Activated B cell treated with CpG ODN at 0.5 μM for 24 hours (primary cell): ENCODE measurements at regions of chr9 and their contacts with region 1.

Region 1: DNA sequence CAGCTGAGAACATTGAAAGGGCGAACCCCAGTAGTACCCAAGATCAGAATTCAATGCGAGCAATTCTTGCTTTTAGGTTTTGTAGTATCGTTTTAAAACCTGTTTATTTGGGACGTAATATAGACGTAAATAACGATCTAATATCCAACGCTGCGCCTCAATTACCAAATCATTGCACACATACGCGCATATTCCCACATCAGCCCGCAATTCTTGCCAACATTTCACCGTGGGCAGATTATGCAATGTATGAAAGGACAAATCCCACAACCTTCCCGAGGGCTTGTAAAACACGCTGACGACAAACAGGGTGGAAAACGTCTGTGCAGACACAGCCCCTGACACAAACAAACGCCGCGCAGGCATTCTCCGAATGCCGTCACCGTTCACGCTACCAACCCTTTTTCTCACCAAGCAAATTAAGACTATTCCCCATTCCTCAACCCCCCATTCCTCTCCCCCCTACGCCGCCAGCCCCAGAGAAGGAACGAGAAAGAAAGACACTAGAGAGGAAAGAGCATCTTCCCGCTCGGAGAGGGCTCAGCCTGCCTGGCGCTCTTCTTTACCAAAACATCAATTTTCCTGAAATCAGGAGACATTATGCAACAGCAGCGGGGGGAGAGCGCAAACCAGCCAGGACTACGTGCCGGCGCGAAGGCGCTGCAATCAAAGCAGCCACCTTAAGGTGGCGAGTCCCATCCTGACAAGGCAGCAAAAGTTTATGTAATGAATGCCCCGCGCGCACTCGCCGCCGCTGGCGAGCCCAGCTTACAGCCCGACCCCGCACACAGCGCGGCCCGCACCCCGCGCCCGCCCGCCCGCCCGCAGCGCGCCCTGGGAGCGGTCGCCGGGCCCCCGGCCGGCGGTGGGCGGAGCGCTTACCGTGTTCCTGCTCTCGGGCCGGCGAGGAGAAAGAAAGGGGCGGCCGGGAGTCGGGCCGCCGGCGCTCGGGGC is 597 bp downstream of the NFIL3 start:
- DNase-seq: peak; percentile 62
- ATAC-seq: peak; percentile 49
- H3K4me3 Mint-ChIP-seq: peak overlapping the region; percentile 93
- H3K27ac Mint-ChIP-seq: peak overlapping the region; percentile 80
- H3K4me1 Mint-ChIP-seq: peaks cover 38% of the 10 kb centered on the region
- H3K27me3 Mint-ChIP-seq: peaks cover 32% of the 10 kb centered on the region
- CTCF ChIP-seq: no peak

Region 2: GRCh38 chr9:90142580-90142979 is 1280.5 kb before region 1 on chr9:
- CTCF ChIA-PET with region 1: no interaction called
- POLR2A ChIA-PET with region 1: no interaction called
- intact Hi-C with region 1: loop called (anchors 10 kb)
- DNase-seq: no peak
- ATAC-seq: no peak
- H3K4me3 Mint-ChIP-seq: no peak overlapping the region
- H3K27ac Mint-ChIP-seq: no peak overlapping the region
- H3K4me1 Mint-ChIP-seq: peaks cover 4% of the 10 kb centered on the region
- H3K27me3 Mint-ChIP-seq: peaks cover 19% of the 10 kb centered on the region
- CTCF ChIP-seq: peak; percentile 45

Region 3: GRCh38 chr9:90985631-90986030 is 437.4 kb before region 1 on chr9:
- CTCF ChIA-PET with region 1: interaction called, 11 read pairs
- POLR2A ChIA-PET with region 1: no interaction called
- intact Hi-C with region 1: loop called (anchors 1 kb)
- DNase-seq: no peak
- ATAC-seq: no peak
- H3K4me3 Mint-ChIP-seq: no peak overlapping the region
- H3K27ac Mint-ChIP-seq: no peak overlapping the region
- H3K4me1 Mint-ChIP-seq: no peaks in the 10 kb centered on the region
- H3K27me3 Mint-ChIP-seq: peaks cover 1% of the 10 kb centered on the region
- CTCF ChIP-seq: no peak

Region 4: GRCh38 chr9:91089405-91090129 is 333.5 kb before region 1 on chr9:
- CTCF ChIA-PET with region 1: interaction called, 23 read pairs
- POLR2A ChIA-PET with region 1: interaction called, 3 read pairs
- intact Hi-C with region 1: loop called (anchors 1 kb)
- DNase-seq: no peak
- ATAC-seq: peak; percentile 28
- H3K4me3 Mint-ChIP-seq: no peak overlapping the region
- H3K27ac Mint-ChIP-seq: no peak overlapping the region
- H3K4me1 Mint-ChIP-seq: no peaks in the 10 kb centered on the region
- H3K27me3 Mint-ChIP-seq: no peaks in the 10 kb centered on the region
- CTCF ChIP-seq: no peak

Region 5: DNA sequence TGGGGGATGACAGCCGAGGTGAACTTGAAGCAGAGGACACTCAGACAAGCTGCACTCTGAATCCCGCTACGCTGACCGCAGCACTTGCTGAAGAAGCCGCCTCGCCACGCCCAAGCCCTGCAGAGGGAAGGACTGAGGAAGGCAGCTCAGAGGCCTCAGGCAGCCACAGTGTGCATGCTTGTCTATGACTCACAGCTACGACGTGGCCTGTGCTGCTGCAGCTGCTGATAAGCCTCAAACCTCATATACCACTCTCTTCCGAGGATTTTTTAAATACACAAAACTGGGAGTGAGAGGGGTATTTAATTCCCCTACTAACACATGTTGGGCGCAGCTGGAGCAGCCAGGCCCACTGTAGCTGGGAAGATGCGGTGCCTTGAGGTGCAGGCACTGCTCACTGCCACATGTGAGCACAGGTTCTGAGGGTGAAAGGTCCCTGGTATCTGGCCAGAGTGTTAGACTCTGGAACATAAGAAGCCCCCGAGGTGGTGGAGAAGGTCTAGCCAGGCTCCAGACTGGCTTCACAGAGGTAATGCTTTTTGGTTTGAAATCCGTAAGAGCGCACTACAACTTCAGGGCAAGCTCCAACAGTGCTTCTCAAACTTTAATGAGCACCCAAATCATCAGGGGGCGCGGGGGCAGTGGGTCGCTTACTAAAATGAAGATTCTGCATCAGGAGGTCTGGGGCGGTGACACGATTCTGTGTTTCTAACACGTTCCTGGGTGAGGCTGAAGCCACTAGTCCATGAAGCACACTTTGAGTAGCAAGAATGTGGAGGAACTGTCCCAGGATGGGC is 258.1 kb before region 1 on chr9:
- CTCF ChIA-PET with region 1: no interaction called
- POLR2A ChIA-PET with region 1: no interaction called
- intact Hi-C with region 1: loop called (anchors 5 kb)
- DNase-seq: no peak
- ATAC-seq: peak; percentile 59
- H3K4me3 Mint-ChIP-seq: no peak overlapping the region
- H3K27ac Mint-ChIP-seq: no peak overlapping the region
- H3K4me1 Mint-ChIP-seq: peaks cover 37% of the 10 kb centered on the region
- H3K27me3 Mint-ChIP-seq: no peaks in the 10 kb centered on the region
- CTCF ChIP-seq: no peak

Region 6: GRCh38 chr9:91361291-91362050 is 61.6 kb before region 1 on chr9 and contains the start of gene AUH:
- CTCF ChIA-PET with region 1: interaction called, 11 read pairs
- POLR2A ChIA-PET with region 1: interaction called, 4 read pairs
- intact Hi-C with region 1: loop called (anchors 1 kb)
- DNase-seq: peak; percentile 89
- ATAC-seq: peak; percentile 97
- H3K4me3 Mint-ChIP-seq: peak within 1 kb of the TSS; percentile 94
- H3K27ac Mint-ChIP-seq: peak within 1 kb of the TSS; percentile 89
- H3K4me1 Mint-ChIP-seq: peaks cover 34% of the 10 kb centered on the region
- H3K27me3 Mint-ChIP-seq: no peaks in the 10 kb centered on the region
- CTCF ChIP-seq: no peak
- total RNA-seq, gene AUH: 11.1 and 14.0 TPM in 2 replicates

Region 7: GRCh38 chr9:91560285-91560684 is 137.2 kb after region 1 on chr9:
- CTCF ChIA-PET with region 1: no interaction called
- POLR2A ChIA-PET with region 1: no interaction called
- intact Hi-C with region 1: no loop called
- DNase-seq: no peak
- ATAC-seq: no peak
- H3K4me3 Mint-ChIP-seq: no peak overlapping the region
- H3K27ac Mint-ChIP-seq: no peak overlapping the region
- H3K4me1 Mint-ChIP-seq: no peaks in the 10 kb centered on the region
- H3K27me3 Mint-ChIP-seq: peaks cover 16% of the 10 kb centered on the region
- CTCF ChIP-seq: no peak

Region 8: DNA sequence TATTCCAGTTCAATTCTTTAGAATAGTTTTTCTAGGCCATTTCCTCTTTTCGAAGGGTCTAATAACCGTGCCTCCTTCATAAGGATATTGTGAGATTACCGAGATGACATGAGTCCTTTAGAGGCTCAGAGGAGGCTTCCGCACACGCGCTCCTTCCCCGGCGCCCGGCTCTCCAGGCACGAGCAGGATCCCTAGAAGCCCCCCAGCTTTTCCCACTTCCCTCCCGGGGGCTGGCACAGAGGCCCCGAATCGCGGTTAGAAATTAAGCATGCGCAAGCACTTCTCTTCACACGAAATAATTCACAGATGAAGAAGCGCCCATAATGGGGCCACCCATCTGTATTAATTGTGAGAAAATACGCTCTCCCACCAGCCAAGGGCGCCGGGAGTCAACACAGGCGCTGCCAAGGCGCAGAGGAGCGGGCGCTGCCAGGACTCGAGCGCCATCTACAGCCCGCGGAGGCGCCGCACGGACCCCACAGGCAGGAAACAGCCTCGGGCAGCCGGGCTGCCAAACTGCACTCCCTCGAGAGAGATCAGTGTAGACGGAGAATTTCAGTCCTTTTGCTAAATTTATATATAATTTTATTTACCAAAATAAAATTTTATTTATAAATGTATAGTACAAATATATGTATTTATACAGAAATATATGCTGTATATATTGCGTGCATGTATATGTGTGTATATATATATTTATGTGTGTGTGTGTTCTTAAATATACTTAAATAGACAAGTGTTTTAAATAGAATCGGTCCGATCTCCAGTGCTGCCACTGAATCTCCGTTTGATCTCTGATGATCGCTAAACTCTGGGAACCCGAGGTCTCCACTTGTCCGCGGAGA is 258.6 kb after region 1 on chr9:
- CTCF ChIA-PET with region 1: no interaction called
- POLR2A ChIA-PET with region 1: no interaction called
- intact Hi-C with region 1: no loop called
- DNase-seq: peak; percentile 51
- ATAC-seq: peak; percentile 87
- H3K4me3 Mint-ChIP-seq: peak overlapping the region; percentile 70
- H3K27ac Mint-ChIP-seq: no peak overlapping the region
- H3K4me1 Mint-ChIP-seq: peaks cover 5% of the 10 kb centered on the region
- H3K27me3 Mint-ChIP-seq: peaks cover 27% of the 10 kb centered on the region
- CTCF ChIP-seq: no peak

Region 9: DNA sequence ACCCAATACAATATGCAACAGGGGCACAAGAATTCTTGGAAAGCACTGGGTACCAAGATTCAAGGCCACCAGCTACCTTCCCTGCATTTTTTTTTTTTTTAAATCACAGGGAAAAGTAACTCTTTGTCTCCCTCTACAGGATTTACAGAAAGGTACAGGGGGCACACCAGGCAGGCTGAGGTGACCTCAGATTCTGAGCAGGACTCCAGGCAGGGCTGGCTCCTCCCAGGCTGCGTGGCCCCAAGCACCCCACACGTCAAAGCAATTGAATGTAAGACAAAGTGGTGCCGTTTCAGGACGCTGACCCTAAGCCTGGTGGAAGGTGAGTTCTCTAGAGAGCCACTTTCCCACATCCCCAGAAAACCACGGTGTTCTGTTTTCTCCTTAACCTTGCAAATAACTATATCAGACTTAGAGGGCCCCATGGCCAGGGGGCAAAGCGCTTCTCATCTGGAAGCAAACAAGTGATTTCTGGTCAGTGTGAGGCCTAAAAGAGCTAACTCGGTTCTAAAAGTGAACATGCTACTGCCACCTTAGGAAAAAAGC is 304.4 kb after region 1 on chr9:
- CTCF ChIA-PET with region 1: interaction called, 6 read pairs
- POLR2A ChIA-PET with region 1: no interaction called
- intact Hi-C with region 1: loop called (anchors 2 kb)
- DNase-seq: no peak
- ATAC-seq: peak; percentile 85
- H3K4me3 Mint-ChIP-seq: no peak overlapping the region
- H3K27ac Mint-ChIP-seq: no peak overlapping the region
- H3K4me1 Mint-ChIP-seq: no peaks in the 10 kb centered on the region
- H3K27me3 Mint-ChIP-seq: no peaks in the 10 kb centered on the region
- CTCF ChIP-seq: no peak